T-cell (primary cell): ENCODE measurements at regions of chr4 and their contacts with region 1.

Region 1: GRCh38 chr4:116453127-116453526 is 632.2 kb downstream of the TRAM1L1 start:
- DNase-seq: no peak
- ATAC-seq: no peak
- H3K4me3 ChIP-seq: no peak overlapping the region
- H3K4me3 Mint-ChIP-seq: no peak overlapping the region
- H3K27ac ChIP-seq: no peak overlapping the region
- H3K27ac Mint-ChIP-seq: no peak overlapping the region
- H3K4me1 ChIP-seq: no peaks in the 10 kb centered on the region
- H3K4me1 Mint-ChIP-seq: no peaks in the 10 kb centered on the region
- H3K27me3 ChIP-seq: no peaks in the 10 kb centered on the region
- H3K27me3 Mint-ChIP-seq: no peaks in the 10 kb centered on the region

Region 2: GRCh38 chr4:116357758-116358157 is 95.4 kb before region 1 on chr4:
- CTCF ChIA-PET with region 1: no interaction called
- POLR2A ChIA-PET with region 1: no interaction called
- DNase-seq: peak in 5 of 35 experiments; percentile 6 to 22 (median 10)
- ATAC-seq: peak in 1 of 4 experiments; percentile 68
- H3K4me3 ChIP-seq: no peak overlapping the region
- H3K4me3 Mint-ChIP-seq: no peak overlapping the region
- H3K27ac ChIP-seq: no peak overlapping the region
- H3K27ac Mint-ChIP-seq: no peak overlapping the region
- H3K4me1 ChIP-seq: no peaks in the 10 kb centered on the region
- H3K4me1 Mint-ChIP-seq: peaks cover 0 to 4% (median 0%) of the 10 kb centered on the region in 3 donors
- H3K27me3 ChIP-seq: no peaks in the 10 kb centered on the region
- H3K27me3 Mint-ChIP-seq: no peaks in the 10 kb centered on the region

Region 3: GRCh38 chr4:116501954-116502353 is 48.8 kb after region 1 on chr4:
- CTCF ChIA-PET with region 1: no interaction called
- POLR2A ChIA-PET with region 1: interaction called in 1 of 2 experiments, 15 read pairs
- DNase-seq: no peak
- ATAC-seq: no peak
- H3K4me3 ChIP-seq: no peak overlapping the region
- H3K4me3 Mint-ChIP-seq: no peak overlapping the region
- H3K27ac ChIP-seq: no peak overlapping the region
- H3K27ac Mint-ChIP-seq: no peak overlapping the region
- H3K4me1 ChIP-seq: no peaks in the 10 kb centered on the region
- H3K4me1 Mint-ChIP-seq: no peaks in the 10 kb centered on the region
- H3K27me3 ChIP-seq: no peaks in the 10 kb centered on the region
- H3K27me3 Mint-ChIP-seq: no peaks in the 10 kb centered on the region